ENCODE measurements at regions of chr22 and their contacts with region 1.

Region 1: GRCh38 chr22:23144932-23145873 is at the start of gene RAB36:
- DNase-seq: peak; percentile 95 to 97 (median 96)
- H3K4me3 ChIP-seq: peak within 1 kb of the TSS in 2 of 3 experiments; percentile 11 to 63
- H3K4me3 Mint-ChIP-seq: peak within 1 kb of the TSS; percentile 73 to 85
- H3K27ac ChIP-seq: no peak within 1 kb of the TSS
- H3K27ac Mint-ChIP-seq: peak within 1 kb of the TSS in 6 of 7 donors; percentile 62 to 90 (median 84)
- H3K4me1 ChIP-seq: peaks cover 31 to 37% of the 10 kb centered on the region in 2 donors
- H3K4me1 Mint-ChIP-seq: peaks cover 32% of the 10 kb centered on the region
- H3K27me3 ChIP-seq: no peaks in the 10 kb centered on the region
- H3K27me3 Mint-ChIP-seq: peaks cover 2 to 7% (median 5%) of the 10 kb centered on the region in 3 donors
- CTCF ChIP-seq: no peak
- polyA plus RNA-seq, gene RAB36: 0.37 to 0.78 (median 0.49) TPM

Region 2: GRCh38 chr22:23069502-23070357 is 75.5 kb before region 1 on chr22:
- intact Hi-C with region 1: loop called in 1 of 2 experiments (anchors 5 kb)
- DNase-seq: peak; percentile 86 to 92 (median 86)
- H3K4me3 ChIP-seq: peak overlapping the region; percentile 6 to 75 (median 37)
- H3K4me3 Mint-ChIP-seq: peak overlapping the region; percentile 81 to 91
- H3K27ac ChIP-seq: no peak overlapping the region
- H3K27ac Mint-ChIP-seq: peak overlapping the region in 4 of 7 donors; percentile 27 to 68 (median 49)
- H3K4me1 ChIP-seq: peaks cover 14 to 18% of the 10 kb centered on the region in 2 donors
- H3K4me1 Mint-ChIP-seq: peaks cover 8% of the 10 kb centered on the region
- H3K27me3 ChIP-seq: peaks cover 14 to 45% of the 10 kb centered on the region in 2 donors
- H3K27me3 Mint-ChIP-seq: peaks cover 38 to 55% (median 43%) of the 10 kb centered on the region in 3 donors
- CTCF ChIP-seq: no peak

Measured in CD14-positive monocyte (primary cell).